HEK293 (cell line): ENCODE measurements at regions of chr11 and their contacts with region 1.

Region 1: DNA sequence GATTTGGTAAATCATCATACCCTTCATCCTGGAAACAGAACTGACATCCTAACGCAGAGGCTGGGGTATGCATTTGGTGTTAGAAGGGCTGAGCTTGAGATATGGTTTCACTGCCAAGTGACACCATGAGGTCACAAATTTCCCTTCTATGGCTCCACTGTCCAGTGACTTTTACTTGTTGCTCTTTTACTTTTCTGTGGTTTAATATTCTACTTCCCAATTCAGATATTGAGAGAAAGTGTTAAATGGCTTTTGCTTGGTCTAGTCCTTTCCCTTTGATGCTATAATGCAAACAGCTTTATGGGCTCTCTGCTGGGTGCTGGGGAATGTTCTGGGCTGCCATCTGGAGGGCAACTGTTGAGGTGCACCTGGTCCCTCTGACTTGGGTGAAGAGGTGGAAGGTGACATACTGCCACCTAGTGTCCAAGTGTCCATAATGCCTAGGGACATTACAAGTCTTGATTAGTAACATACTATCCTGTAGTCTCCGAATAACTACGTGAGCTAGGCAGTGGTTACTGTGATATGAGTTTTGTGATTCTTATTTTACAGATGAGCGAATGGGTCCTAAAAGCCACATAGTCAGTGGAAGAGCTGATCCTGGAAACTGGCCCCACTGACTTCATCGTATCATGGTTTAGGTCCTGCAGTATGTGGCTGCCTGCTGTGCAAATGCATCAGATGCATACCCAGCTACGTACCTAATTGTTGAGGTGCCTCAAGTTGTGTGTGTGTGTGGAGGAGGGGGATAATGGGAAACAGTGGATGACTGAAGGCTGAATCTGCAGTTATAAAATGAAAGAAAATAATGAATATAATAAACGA is 149.1 kb upstream of the RAG2 start:
- H3K4me3 ChIP-seq: no peak overlapping the region
- H3K27ac ChIP-seq: no peak overlapping the region
- H3K4me1 ChIP-seq: no peaks in the 10 kb centered on the region
- CTCF ChIP-seq: peak; percentile 93

Region 2: GRCh38 chr11:36372101-36372767 is 374.9 kb before region 1 on chr11:
- CTCF ChIA-PET with region 1: no interaction called
- POLR2A ChIA-PET with region 1: no interaction called
- H3K4me3 ChIP-seq: no peak overlapping the region
- H3K27ac ChIP-seq: no peak overlapping the region
- H3K4me1 ChIP-seq: no peaks in the 10 kb centered on the region
- CTCF ChIP-seq: no peak

Region 3: GRCh38 chr11:36577859-36578258 is 169.2 kb before region 1 on chr11:
- CTCF ChIA-PET with region 1: interaction called, 20 read pairs
- POLR2A ChIA-PET with region 1: no interaction called
- H3K4me3 ChIP-seq: no peak overlapping the region
- H3K27ac ChIP-seq: no peak overlapping the region
- H3K4me1 ChIP-seq: no peaks in the 10 kb centered on the region
- CTCF ChIP-seq: no peak

Region 4: DNA sequence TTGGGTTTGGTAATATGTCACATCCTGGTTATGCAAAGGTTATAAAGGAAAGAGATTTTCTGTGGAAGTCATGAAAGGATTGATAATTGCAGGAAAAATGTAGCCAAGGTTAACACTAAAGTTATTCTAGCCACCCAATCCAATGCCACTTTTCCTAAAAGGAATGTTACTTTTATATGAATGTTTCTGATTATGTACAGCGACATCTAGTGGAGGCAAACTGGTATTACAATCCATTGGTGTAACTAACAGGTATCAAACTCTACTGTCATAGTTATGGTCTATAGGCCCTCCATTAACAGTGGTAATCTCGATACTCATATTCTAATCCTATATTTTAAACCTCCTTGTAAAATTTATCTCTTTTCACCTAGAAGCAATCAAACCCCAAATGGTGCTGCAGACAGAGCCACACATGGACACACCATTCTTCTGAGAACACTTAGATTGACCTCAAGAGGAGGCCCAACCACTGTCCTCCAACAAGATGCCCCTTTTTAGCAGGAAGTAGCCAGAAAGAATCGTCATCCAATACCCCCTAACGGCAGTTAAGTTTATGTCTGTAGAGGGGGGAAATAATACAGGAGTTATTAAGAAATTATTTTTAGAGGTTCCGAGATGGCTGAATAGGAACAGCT is 74.2 kb before region 1 on chr11:
- CTCF ChIA-PET with region 1: interaction called, 17 read pairs
- POLR2A ChIA-PET with region 1: no interaction called
- H3K4me3 ChIP-seq: no peak overlapping the region
- H3K27ac ChIP-seq: no peak overlapping the region
- H3K4me1 ChIP-seq: no peaks in the 10 kb centered on the region
- CTCF ChIP-seq: no peak

Region 5: DNA sequence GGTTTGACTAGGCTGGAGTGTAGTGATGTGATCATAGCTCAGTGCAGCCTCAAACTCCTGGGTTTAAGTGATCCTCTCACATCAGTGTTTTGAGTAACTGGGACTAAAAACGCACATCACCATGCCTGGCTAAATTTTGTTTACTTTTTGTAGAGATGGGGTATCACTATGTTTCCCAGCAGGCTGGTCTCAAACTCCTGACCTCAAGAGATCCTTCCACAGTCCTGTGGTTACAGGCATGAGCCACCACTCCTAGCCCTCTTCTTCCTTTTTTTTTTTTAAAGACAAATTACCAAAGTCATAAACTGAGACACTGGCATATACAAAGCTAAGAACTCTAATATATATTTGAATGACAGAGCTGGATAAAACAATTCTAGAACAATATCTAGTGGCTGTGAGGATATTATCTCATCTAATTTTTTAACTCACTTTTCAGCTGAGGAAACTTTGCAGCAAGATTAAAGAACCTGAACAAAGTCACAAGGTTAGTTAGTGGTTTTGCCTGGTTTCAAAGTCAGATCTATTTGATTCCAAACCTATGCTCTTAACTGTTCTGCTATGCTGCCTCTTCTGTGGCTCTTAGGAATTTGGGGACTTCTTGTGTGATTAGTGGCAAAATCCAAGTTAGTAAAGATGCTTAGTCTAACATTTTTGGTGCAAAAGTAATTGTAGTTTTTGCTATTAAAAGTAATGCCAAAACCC is 53.8 kb before region 1 on chr11:
- CTCF ChIA-PET with region 1: interaction called, 261 read pairs
- POLR2A ChIA-PET with region 1: no interaction called
- H3K4me3 ChIP-seq: no peak overlapping the region
- H3K27ac ChIP-seq: no peak overlapping the region
- H3K4me1 ChIP-seq: no peaks in the 10 kb centered on the region
- CTCF ChIP-seq: no peak

Region 6: DNA sequence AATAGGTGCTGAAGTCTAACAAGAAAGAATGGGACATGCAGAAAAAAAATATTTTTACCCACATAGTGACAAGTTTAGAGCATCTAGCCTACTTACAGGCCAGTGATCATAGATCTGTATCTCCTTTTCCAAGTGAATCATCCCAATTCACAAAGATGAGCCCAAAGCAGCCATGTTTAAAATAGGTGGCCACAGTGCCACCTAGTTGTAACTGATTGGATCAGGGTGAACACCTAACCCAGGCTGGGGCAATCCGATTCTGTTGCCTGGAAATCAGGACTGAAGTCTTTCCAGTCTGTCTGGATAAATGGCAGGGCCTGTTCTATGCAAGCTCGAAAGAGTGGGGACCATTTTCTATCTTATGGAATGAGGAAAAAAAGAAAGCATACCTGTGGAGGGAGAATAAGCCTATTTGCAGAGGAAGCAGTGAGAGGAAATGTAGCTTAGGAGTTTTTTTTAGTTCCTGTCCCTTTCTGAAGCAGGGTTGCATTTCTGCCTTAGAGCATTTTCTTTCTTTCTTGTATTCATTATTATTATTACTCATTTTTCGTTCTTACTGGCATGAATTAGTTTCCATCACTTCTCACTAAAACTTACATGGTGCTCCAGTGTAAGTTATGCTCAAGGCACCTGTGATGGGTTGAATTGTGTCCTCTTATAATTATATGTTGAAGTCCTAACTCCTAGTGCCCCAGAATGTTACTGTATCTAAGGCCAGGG is 35.8 kb before region 1 on chr11:
- CTCF ChIA-PET with region 1: interaction called, 61 read pairs
- POLR2A ChIA-PET with region 1: interaction called, 3 read pairs
- H3K4me3 ChIP-seq: no peak overlapping the region
- H3K27ac ChIP-seq: no peak overlapping the region
- H3K4me1 ChIP-seq: no peaks in the 10 kb centered on the region
- CTCF ChIP-seq: no peak

Region 7: DNA sequence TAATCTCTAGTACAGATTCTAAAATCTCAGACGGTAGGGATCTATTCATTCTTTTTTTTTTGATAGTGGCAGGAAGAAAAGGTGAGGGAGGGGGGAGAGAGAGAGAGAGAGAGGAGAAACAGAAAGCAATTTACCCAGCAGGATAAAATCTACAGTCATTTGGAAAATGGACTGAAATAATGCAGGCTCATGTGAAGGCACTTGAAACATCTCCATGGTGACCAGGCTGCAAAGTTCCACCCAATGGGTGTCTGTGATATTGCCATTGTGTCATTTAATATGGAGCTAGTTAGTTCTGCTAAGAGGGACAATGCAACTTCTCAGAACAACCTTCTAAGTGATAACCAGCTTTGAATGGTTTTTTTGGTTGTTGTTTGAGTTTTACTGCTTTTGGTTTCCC is 16.1 kb after region 1 on chr11:
- CTCF ChIA-PET with region 1: interaction called, 32 read pairs
- POLR2A ChIA-PET with region 1: no interaction called
- H3K4me3 ChIP-seq: no peak overlapping the region
- H3K27ac ChIP-seq: no peak overlapping the region
- H3K4me1 ChIP-seq: no peaks in the 10 kb centered on the region
- CTCF ChIP-seq: no peak

Region 8: DNA sequence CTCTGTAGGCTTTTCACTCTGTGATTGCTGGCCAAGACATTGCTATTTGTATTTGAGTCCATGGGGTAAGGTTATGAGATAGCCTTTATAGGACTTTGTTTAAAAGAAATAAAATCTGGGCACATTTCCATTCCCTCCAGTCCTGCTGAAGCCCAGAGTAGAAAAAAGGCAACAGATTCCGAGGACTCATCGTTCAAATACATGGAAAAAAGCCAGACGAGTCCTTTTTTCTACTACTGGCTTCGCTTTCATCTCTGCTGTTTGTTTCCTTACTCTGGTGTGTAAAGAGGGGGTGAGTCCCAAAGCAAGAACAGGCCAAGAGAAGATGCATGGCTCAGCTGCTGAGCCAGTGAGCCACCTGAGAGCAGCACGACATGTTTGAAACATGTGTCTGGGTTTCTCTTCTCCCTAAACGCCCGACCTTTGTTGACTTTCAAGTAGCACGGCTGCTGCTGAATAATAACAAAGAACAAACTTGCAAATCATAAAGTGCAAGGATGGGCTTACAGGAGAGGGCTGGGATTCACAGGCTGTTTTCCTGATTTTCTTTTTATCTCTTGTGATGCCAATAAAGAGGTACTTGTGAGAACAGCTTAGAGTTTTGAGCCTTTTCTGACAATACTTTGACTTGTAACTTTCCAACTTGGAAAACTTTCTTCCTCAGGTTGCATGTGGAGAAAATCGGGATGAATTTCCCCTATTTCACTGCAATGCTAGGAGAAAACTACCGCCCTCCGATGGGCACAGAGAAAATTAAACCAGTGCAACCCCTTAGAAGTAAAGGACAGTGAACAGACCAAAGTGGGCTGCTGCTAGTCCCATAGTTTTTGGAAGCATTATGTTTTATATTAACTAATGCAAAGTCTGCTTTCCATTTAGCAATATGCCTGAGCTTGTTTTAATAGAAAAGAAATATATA is 46.2 kb after region 1 on chr11:
- CTCF ChIA-PET with region 1: interaction called, 10 read pairs
- POLR2A ChIA-PET with region 1: no interaction called
- H3K4me3 ChIP-seq: no peak overlapping the region
- H3K27ac ChIP-seq: no peak overlapping the region
- H3K4me1 ChIP-seq: no peaks in the 10 kb centered on the region
- CTCF ChIP-seq: no peak

Region 9: DNA sequence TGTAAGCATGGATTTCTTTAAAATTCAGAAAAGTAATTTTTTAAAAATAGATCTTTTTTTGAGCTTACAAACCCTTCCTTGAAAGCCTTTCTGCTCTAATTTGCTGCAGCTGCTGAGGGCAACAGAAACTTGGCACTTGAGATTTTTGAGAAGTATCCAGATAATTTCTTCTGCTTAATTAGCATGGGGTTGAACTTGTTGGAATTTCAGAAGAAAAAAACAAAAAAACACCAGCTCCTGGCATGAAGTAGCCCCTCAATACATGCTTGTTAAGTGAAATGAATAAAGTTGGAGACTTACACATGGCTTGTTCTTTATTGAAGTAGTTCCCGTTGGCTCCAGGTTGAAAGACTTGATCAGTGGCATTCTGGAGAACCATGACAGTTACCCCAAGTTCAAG is 182.3 kb after region 1 on chr11:
- CTCF ChIA-PET with region 1: no interaction called
- POLR2A ChIA-PET with region 1: no interaction called
- H3K4me3 ChIP-seq: no peak overlapping the region
- H3K27ac ChIP-seq: no peak overlapping the region
- H3K4me1 ChIP-seq: no peaks in the 10 kb centered on the region
- CTCF ChIP-seq: no peak